Mammary epithelial cell (primary cell): ENCODE measurements at regions of chr3 and their contacts with region 1.

Region 1: DNA sequence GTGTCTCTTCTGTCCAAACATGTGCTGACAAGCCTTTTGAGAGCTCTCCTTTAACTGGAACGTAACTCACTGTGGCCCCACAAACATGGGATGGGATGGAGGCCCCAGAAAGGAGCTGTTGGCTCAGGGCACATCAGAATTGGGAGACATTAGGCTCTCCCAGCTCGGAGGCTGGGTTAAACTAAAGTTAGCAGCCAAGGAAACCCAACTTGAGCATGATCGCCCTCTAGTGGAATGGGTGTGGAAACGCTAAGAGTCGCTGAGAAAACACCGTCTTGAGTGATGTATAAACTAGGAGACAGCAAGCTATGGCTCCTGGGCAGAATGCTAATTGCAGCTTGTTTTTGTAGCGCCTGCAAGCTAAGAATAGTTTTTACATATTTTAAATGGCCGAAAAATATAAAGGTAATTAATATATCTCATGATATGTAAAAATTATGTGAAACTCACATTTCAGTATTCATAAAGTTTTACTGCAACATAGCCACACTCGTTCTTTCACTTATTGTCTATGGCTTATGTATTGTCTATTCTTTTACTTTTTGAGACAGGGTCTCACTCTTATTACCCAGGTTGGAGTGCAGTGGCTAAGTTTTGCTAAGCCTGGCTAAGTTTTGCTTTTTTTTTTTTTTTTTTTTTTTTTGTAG is 138.8 kb upstream of the HACD2 start:
- DNase-seq: peak; percentile 66
- H3K4me3 ChIP-seq: no peak overlapping the region
- H3K27ac ChIP-seq: no peak overlapping the region
- H3K4me1 ChIP-seq: peaks cover 7% of the 10 kb centered on the region
- H3K27me3 ChIP-seq: no peaks in the 10 kb centered on the region
- CTCF ChIP-seq: peak; percentile 87 to 92

Region 2: GRCh38 chr3:123667784-123668183 is 55.9 kb before region 1 on chr3:
- CTCF ChIA-PET with region 1: interaction called, 3 read pairs
- dilution Hi-C with region 1: loop called (anchors 5 kb)
- in situ Hi-C with region 1: no loop called
- intact Hi-C with region 1: no loop called
- DNase-seq: no peak
- H3K4me3 ChIP-seq: no peak overlapping the region
- H3K27ac ChIP-seq: no peak overlapping the region
- H3K4me1 ChIP-seq: no peaks in the 10 kb centered on the region
- H3K27me3 ChIP-seq: no peaks in the 10 kb centered on the region
- CTCF ChIP-seq: no peak

Region 3: DNA sequence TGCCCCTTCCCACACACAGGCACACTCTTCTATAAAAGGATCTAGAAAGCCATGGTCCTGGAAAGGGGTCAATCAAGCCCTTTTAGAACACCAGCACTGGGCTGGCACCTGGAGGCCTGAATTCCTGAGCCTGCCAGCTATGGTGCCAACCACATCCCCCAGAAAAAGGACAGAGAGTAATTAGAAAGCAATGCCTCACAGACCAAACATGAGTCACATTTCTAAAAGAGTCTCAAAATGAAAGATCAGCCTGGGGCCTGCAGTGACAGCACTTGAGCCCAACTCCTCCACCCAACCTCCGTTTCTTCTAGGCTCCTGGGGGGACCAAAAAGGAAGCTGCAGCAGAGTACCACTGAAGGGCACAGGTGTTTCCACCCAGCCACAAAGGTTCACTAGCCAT is 146.4 kb after region 1 on chr3:
- CTCF ChIA-PET with region 1: no interaction called
- dilution Hi-C with region 1: no loop called
- in situ Hi-C with region 1: no loop called
- intact Hi-C with region 1: no loop called
- DNase-seq: peak; percentile 77
- H3K4me3 ChIP-seq: no peak overlapping the region
- H3K27ac ChIP-seq: peak overlapping the region; percentile 31
- H3K4me1 ChIP-seq: peaks cover 31% of the 10 kb centered on the region
- H3K27me3 ChIP-seq: no peaks in the 10 kb centered on the region
- CTCF ChIP-seq: no peak

Region 4: GRCh38 chr3:123984957-123985356 is 261.3 kb after region 1 on chr3:
- CTCF ChIA-PET with region 1: no interaction called
- dilution Hi-C with region 1: no loop called
- in situ Hi-C with region 1: no loop called
- intact Hi-C with region 1: loop called (anchors 5 kb)
- DNase-seq: no peak
- H3K4me3 ChIP-seq: no peak overlapping the region
- H3K27ac ChIP-seq: no peak overlapping the region
- H3K4me1 ChIP-seq: peaks cover 4% of the 10 kb centered on the region
- H3K27me3 ChIP-seq: peaks cover 7% of the 10 kb centered on the region
- CTCF ChIP-seq: no peak